ENCODE measurements at regions of chr6 and their contacts with region 1.

Region 1: DNA sequence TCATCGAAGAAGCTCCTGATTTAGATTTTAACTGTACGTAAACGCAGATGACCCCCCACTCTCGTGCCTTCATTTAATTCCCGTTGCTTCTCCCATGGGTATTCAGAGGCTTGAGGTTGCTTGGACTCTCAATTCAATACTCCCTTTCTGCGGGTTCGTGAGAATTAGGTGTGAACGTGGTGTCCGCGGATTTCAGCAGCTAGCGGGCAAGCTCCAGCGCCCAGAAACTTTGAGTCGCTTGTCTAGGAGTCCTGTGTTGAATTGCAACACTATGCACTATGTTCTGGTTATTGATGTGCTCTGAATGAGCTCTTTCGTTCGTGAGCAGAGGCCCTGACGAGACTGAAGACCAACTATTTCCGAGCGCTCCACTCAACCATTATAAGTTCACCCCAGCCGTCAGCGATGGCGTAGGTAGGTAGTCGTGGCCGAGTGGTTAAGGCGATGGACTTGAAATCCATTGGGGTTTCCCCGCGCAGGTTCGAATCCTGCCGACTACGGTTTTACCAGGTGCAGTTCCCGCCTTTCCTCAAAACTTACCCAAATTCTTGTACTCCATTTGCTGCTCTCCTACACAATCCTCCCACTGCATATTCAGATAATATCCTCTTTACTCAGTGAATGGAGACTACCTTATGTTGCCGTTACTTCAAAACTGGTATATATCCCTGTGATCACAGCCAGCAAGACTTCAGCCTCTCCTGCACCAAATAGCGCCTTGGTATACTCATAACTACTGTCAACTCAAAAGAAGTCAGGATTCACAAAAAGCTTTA is 72.6 kb upstream of the ZNF184 start:
- DNase-seq: peak; percentile 73
- ATAC-seq: peak; percentile 71
- H3K4me3 Mint-ChIP-seq: peak overlapping the region; percentile 63
- H3K27ac Mint-ChIP-seq: no peak overlapping the region
- H3K4me1 Mint-ChIP-seq: peaks cover 15% of the 10 kb centered on the region
- H3K27me3 Mint-ChIP-seq: peaks cover 79% of the 10 kb centered on the region

Region 2: GRCh38 chr6:27280064-27280539 is 265.4 kb before region 1 on chr6:
- CTCF ChIA-PET with region 1: no interaction called
- POLR2A ChIA-PET with region 1: no interaction called
- intact Hi-C with region 1: loop called in 1 of 2 experiments (anchors 5 kb)
- DNase-seq: peak; percentile 64
- ATAC-seq: peak; percentile 36
- H3K4me3 Mint-ChIP-seq: peak overlapping the region; percentile 58
- H3K27ac Mint-ChIP-seq: peak overlapping the region; percentile 13
- H3K4me1 Mint-ChIP-seq: peaks cover 10% of the 10 kb centered on the region
- H3K27me3 Mint-ChIP-seq: peaks cover 71% of the 10 kb centered on the region

Region 3: GRCh38 chr6:27290065-27290849 is 255.2 kb before region 1 on chr6:
- CTCF ChIA-PET with region 1: no interaction called
- POLR2A ChIA-PET with region 1: no interaction called
- intact Hi-C with region 1: loop called (anchors 2 to 5 kb)
- DNase-seq: no peak
- ATAC-seq: no peak
- H3K4me3 Mint-ChIP-seq: no peak overlapping the region
- H3K27ac Mint-ChIP-seq: no peak overlapping the region
- H3K4me1 Mint-ChIP-seq: peaks cover 14% of the 10 kb centered on the region
- H3K27me3 Mint-ChIP-seq: peaks cover 80% of the 10 kb centered on the region

Region 4: DNA sequence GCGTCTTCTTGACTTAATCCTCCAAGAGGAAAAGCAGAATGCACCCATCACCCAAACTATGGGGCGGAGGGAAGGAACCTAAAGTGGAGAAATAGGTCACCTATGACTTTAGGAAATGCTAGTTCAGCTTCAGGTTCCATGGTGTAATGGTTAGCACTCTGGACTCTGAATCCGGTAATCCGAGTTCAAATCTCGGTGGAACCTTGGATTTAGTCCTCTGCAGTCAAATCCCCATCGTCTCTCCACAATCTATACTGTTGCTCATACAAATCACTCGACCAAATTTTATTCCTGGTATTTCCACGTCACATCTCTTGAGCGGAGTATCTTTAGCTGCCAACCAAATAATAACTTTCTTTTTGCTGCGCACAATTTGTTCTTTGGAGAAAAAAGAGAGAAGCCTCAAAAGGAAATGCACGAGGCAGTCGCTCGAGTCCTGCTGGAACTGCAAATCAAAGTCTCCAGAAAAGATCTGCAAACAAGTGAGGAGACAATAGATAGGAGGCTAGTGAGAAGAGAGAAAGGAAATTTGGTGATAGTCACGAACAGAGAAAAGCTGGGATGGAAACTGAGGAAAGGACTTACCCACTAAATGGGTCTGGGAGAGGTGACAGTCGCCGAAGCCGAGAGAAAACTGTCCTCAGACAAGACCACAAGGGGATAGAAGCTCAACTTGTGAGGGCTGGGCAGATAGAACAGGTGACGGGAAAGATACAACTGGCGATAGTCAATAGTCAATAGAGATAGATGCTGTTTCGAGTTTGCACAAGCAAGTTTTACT is 250.0 kb before region 1 on chr6:
- CTCF ChIA-PET with region 1: no interaction called
- POLR2A ChIA-PET with region 1: no interaction called
- intact Hi-C with region 1: loop called (anchors 2 to 5 kb)
- DNase-seq: no peak
- ATAC-seq: no peak
- H3K4me3 Mint-ChIP-seq: no peak overlapping the region
- H3K27ac Mint-ChIP-seq: no peak overlapping the region
- H3K4me1 Mint-ChIP-seq: peaks cover 11% of the 10 kb centered on the region
- H3K27me3 Mint-ChIP-seq: peaks cover 72% of the 10 kb centered on the region

Region 5: DNA sequence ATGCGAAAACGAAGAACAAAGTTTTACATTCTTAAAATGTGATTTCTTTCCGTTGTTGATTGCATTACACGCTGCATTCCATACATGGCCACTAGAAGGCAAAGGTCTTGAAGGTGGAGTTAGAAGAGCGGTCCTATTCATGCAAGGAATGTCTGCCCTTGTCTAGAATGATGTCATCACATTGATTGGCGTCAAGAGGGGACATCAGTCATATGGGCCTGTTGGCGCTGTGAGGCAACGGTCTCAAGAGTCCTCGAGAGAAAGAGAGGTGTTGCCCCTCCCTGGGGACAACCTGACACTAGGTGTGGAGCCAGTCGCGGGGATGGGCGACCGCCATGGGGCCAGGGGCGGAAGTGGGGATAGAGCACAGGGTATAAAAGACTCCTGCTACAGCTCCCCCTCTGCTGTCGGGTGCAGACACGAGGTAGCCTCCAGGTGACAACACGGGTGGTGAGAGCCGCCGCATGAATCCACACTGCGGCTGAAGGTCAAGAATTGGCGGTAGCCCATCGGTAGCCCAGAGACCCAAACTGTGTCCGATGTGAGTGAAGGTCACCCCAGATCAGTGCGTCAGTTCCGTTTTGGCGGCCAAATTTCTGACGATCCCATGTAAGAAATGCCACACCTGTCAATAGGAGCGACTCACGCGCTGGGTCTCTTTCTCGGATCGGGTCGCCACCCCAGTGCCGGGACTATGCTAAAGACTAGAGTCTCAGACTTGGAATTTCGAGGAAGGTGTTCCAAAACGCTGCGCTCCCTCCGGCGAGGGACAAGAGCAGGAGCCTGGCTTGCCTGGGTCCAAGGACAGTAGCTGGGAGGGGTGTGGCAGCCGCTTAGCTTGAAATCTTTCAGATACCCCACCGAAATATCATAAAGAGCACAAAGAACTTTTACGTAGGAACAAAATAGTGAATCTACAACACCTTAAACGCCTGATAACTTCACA is 20.6 kb after region 1 on chr6:
- CTCF ChIA-PET with region 1: no interaction called
- POLR2A ChIA-PET with region 1: no interaction called
- intact Hi-C with region 1: no loop called
- DNase-seq: peak; percentile 14
- ATAC-seq: peak; percentile 55
- H3K4me3 Mint-ChIP-seq: peak overlapping the region; percentile 3
- H3K27ac Mint-ChIP-seq: no peak overlapping the region
- H3K4me1 Mint-ChIP-seq: peaks cover 6% of the 10 kb centered on the region
- H3K27me3 Mint-ChIP-seq: peaks cover 58% of the 10 kb centered on the region

Region 6: GRCh38 chr6:27592481-27593199 is 47.2 kb after region 1 on chr6:
- CTCF ChIA-PET with region 1: no interaction called
- POLR2A ChIA-PET with region 1: no interaction called
- intact Hi-C with region 1: loop called in 1 of 2 experiments (anchors 5 kb)
- DNase-seq: peak; percentile 72
- ATAC-seq: peak; percentile 94
- H3K4me3 Mint-ChIP-seq: no peak overlapping the region
- H3K27ac Mint-ChIP-seq: no peak overlapping the region
- H3K4me1 Mint-ChIP-seq: no peaks in the 10 kb centered on the region
- H3K27me3 Mint-ChIP-seq: peaks cover 35% of the 10 kb centered on the region